Activated CD4-positive, alpha-beta T cell treated with anti-CD3 and anti-CD28 coated beads, Interleukin-2, amount 10 ng/mL, durations not matched to agents 24 days and 14 days (primary cell): ENCODE measurements at regions of chr21 and their contacts with region 1.

Region 1: GRCh38 chr21:25734904-25735645 is at the starts of genes ATP5PF and GABPA:
- DNase-seq: peak; percentile 99
- H3K4me3 Mint-ChIP-seq: peak within 1 kb of the TSS; percentile 100
- H3K27ac Mint-ChIP-seq: peak within 1 kb of the TSS; percentile 100
- H3K4me1 Mint-ChIP-seq: peaks cover 35% of the 10 kb centered on the region
- H3K27me3 Mint-ChIP-seq: peaks cover 4% of the 10 kb centered on the region
- total RNA-seq, gene ATP5PF: 174 TPM in 2 replicates
- total RNA-seq, gene GABPA: 25.6 and 27.6 TPM in 2 replicates

Region 2: DNA sequence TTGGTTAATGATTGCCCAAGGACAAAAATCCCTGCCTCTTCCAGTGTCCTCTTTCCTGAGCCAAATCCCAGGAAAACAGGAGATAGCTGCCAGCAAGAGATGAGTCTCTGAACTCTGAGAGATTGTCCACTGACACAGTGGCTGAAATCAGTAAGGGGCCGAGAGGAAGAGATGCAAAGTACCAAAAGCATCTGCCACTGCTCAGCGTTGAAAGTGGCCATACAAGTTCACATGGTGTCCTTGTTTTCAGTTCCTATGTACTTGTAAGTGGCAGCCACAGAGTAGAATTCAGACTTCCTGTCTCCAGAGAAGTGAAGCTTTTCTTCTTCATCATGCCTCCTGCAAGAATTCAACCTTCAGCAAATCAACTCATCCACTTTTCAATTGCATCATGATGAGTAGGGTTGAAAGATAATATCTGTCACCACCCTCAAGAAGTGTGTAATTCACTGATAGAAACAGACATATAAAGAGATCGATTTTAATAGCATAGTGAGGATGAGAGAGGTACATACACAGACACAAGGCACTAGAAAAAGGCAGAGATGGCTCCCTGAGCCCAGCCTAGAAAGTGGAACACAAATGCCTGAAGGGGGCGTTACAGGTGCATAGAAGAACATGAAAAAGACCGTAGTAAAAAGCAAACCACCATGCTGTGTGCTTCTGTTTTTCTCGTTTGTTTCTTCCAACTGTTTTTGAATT is 313.6 kb before region 1 on chr21:
- intact Hi-C with region 1: loop called (anchors 5 kb)
- DNase-seq: peak; percentile 89
- H3K4me3 Mint-ChIP-seq: peak overlapping the region; percentile 70
- H3K27ac Mint-ChIP-seq: peak overlapping the region; percentile 93
- H3K4me1 Mint-ChIP-seq: peaks cover 39% of the 10 kb centered on the region
- H3K27me3 Mint-ChIP-seq: no peaks in the 10 kb centered on the region

Region 3: DNA sequence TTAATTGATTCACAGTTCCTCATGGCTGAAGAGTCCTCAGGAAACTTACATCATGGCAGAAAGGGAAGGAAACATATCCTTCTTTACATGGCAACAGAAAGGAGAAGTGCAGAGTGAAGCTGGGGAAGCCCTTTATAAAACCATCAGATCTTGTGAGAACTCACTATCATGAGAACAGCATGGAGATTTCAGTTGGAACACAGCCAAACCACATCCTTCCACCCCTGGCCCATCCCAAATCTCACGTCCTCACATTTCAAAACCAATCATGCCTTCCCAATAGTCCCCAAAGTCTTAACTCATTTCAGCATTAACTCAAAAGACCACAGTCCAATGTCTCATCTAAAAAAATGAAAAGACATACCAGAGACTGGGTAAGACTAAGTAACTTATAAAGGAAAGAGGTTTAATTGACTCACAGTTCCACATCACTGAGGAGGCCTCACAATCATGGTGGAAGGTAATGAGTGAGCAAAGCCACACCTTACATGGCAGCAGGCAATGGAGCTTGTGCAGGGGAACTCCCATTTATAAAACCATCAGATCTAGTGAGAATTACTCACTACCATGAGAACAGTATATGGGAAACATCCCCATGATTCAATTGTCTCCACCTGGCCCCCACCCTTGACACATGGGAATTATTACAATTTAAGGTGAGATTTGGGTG is 232.9 kb before region 1 on chr21:
- intact Hi-C with region 1: loop called (anchors 10 kb)
- DNase-seq: peak; percentile 67
- H3K4me3 Mint-ChIP-seq: peak overlapping the region; percentile 52
- H3K27ac Mint-ChIP-seq: peak overlapping the region; percentile 96
- H3K4me1 Mint-ChIP-seq: peaks cover 39% of the 10 kb centered on the region
- H3K27me3 Mint-ChIP-seq: no peaks in the 10 kb centered on the region

Region 4: DNA sequence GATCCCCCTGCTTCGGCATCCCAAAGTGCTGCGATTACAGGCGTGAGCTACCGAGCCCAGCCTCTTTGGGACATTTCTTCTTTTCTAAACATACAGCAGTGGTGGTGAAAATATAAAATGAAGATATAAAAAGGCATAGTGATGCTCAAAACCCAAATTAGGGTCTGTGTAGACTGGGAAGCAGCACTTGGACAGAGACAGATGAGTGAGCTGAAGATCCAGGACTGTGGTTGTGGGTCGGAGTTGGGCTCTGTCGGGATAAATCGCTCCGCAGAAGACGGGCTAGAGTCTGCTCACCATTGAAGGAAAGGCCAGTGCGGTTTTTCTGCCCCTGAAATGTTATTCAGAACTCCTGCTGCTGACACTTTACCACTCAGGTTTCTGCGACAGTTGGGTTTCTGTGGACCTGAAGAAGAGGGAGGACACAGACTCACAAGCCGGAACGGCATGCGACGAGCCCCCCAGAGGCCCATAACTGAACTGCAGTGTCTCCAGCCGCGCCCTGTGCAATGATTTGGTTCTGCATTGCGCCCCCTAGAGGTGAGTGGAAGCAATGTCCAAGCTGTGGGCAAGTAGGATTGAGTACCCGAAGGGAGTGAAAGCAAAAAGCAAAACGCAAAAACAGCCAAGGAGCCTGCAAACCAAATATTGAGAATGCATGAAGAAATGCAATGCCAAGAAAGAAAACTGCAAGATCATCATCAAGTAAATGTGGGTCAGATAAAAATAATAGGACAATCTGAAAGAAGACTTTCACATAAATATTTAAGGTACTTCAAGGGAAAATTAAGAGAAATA is 66.3 kb after region 1 on chr21:
- intact Hi-C with region 1: loop called (anchors 1 kb)
- DNase-seq: peak; percentile 97
- H3K4me3 Mint-ChIP-seq: peak overlapping the region; percentile 55
- H3K27ac Mint-ChIP-seq: no peak overlapping the region
- H3K4me1 Mint-ChIP-seq: peaks cover 6% of the 10 kb centered on the region
- H3K27me3 Mint-ChIP-seq: peaks cover 31% of the 10 kb centered on the region

Region 5: DNA sequence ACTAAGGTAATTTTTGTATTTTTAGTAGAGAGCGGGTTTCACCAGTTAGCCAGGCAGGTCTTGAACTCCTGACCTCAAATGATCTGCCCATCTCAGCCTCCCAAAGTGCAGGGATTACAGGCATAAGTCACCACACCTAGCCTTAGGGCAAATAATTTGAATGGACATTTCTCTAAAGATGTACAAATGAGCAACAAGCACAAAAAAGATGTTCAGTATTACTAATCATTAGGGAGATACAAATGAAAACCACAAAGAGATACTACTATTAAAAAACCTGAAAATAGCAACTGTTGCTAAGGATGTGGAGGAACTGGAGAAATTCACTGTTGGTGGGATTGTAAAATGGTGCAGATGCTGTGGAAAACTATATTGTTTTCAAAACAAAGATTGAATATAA is 78.8 kb after region 1 on chr21:
- intact Hi-C with region 1: no loop called
- DNase-seq: no peak
- H3K4me3 Mint-ChIP-seq: no peak overlapping the region
- H3K27ac Mint-ChIP-seq: no peak overlapping the region
- H3K4me1 Mint-ChIP-seq: peaks cover 4% of the 10 kb centered on the region
- H3K27me3 Mint-ChIP-seq: peaks cover 3% of the 10 kb centered on the region